Endothelial cell of umbilical vein (primary cell): ENCODE measurements at regions of chr16 and their contacts with region 1.

Region 1: DNA sequence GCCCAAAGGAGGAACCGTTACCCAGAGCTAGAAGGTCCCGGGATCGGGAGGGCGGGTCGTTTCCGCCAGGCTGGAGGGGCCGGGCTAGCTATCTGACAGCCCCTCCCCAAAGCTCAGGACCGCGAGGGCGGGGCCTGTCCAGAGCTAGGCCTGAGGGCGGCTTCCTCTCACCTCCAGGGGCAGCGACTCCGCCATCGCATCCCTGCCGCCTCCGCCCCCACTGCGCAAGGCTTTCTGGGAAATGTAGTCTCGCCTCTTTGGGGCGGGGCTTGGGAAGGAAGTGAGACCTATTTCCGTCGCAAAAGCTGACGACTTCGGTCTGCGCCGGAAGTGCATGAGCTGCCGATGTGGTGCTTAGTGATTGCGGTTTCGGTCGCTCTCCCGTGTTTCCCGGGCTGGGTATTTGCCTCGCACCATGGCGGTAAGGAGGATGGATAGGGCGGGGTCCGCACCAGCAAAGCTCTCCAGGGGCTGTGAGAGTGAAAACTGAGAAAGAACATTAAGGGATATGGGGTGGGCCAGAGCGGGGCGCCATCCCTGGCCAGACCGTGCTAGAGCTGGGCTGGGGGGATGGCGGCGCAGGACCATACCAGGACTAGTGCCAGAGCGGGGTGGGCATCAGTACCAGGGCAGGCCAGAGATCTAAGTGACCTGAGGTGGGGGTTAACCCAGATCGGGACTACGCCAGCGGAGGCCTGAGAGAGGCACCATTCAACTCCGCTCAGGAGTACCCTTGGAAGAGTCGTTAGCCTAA is at the start of gene TMEM208:
- DNase-seq: peak; percentile 98
- H3K4me3 ChIP-seq: peak within 1 kb of the TSS; percentile 66 to 86 (median 78)
- H3K27ac ChIP-seq: peak within 1 kb of the TSS; percentile 44
- H3K4me1 ChIP-seq: peaks cover 18% of the 10 kb centered on the region
- H3K27me3 ChIP-seq: no peaks in the 10 kb centered on the region
- CTCF ChIP-seq: peak in 1 of 2 donors; percentile 21
- POLR2A ChIP-seq: peak; percentile 81
- total RNA-seq, gene TMEM208: 35.3 and 36.3 TPM in 2 replicates

Region 2: DNA sequence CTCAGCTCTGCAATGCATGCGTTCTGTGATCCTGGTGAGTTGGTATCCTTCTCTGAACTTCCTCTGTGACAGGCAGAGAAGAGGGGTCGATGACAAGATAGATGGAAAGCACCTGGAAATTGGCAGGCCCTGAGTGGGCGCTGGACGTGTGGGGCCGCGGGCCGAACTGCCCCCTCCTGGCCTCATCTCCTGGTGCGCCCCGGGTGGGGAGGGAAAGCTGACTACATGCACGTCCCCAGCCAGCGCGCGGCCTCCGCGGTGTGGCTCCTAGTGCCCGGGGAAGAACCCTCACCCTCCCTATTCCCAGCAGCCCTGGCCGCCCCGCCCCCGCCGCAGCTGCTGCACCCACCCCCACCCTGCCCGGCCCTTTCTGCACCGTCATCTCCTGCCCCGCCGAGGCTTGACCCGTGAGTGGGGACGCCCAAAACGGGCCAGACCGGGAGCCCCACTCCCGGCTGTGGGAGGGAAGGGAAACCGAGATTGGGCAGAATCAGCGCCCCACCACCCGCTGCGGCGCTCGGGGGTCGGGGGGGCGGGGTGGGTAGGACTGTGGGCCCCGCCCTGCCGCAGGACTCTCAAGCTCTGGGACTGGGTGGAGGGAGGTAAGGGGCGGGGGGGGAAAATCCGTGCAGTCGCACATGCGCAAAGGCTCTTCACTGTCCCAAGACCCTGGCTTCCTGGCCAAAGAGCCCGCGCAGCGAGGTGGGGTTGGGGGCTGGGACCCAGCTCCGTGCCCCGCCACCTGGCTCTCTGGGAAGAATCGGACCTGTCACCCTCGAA is 56.6 kb before region 1 on chr16 and contains the start of gene NOL3:
- CTCF ChIA-PET with region 1: no interaction called
- POLR2A ChIA-PET with region 1: no interaction called
- dilution Hi-C with region 1: no loop called
- intact Hi-C with region 1: no loop called
- DNase-seq: peak; percentile 88
- H3K4me3 ChIP-seq: peak within 1 kb of the TSS; percentile 29 to 50 (median 34)
- H3K27ac ChIP-seq: peak within 1 kb of the TSS; percentile 74
- H3K4me1 ChIP-seq: peaks cover 27% of the 10 kb centered on the region
- H3K27me3 ChIP-seq: peaks cover 13 to 19% of the 10 kb centered on the region in 2 experiments
- CTCF ChIP-seq: peak in 1 of 2 donors; percentile 6
- POLR2A ChIP-seq: peak; percentile 63
- total RNA-seq, gene NOL3: 14.4 and 19.4 TPM in 2 replicates

Region 3: GRCh38 chr16:67191995-67192681 is 34.8 kb before region 1 on chr16 and contains the start of gene E2F4:
- CTCF ChIA-PET with region 1: no interaction called
- POLR2A ChIA-PET with region 1: no interaction called
- dilution Hi-C with region 1: no loop called
- intact Hi-C with region 1: loop called (anchors 5 kb)
- DNase-seq: peak; percentile 88
- H3K4me3 ChIP-seq: peak within 1 kb of the TSS; percentile 54 to 83 (median 57)
- H3K27ac ChIP-seq: peak within 1 kb of the TSS; percentile 88
- H3K4me1 ChIP-seq: peaks cover 36% of the 10 kb centered on the region
- H3K27me3 ChIP-seq: no peaks in the 10 kb centered on the region
- CTCF ChIP-seq: no peak
- POLR2A ChIP-seq: peak; percentile 93
- total RNA-seq, gene E2F4: 110 and 112 TPM in 2 replicates

Region 4: DNA sequence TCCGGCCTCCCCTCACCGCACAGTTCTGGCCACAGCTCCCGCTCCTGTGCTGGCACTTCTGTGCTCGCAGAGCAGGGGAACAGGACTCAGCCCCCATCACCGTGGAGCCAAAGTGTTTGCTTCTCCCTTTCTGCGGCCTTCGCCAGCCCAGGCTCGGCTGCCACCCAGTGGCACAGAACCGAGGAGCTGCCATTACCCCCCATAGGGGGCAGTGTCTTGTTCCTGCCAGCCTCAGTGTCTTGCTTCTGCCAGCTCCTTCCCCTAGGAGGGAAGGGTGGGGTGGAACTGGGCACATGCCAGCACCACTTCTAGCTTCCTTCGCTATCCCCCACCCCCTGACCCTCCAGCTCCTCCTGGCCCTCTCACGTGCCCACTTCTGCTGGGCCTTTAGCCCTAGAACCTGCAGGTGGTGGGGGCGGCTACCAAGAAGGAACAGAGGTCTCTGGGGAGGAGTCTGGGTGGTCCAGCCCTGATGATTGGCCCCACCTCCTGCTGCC is 28.7 kb before region 1 on chr16:
- CTCF ChIA-PET with region 1: interaction called, 15 read pairs
- POLR2A ChIA-PET with region 1: no interaction called
- dilution Hi-C with region 1: no loop called
- intact Hi-C with region 1: loop called (anchors 5 kb)
- DNase-seq: peak; percentile 63
- H3K4me3 ChIP-seq: no peak overlapping the region
- H3K27ac ChIP-seq: no peak overlapping the region
- H3K4me1 ChIP-seq: peaks cover 12% of the 10 kb centered on the region
- H3K27me3 ChIP-seq: no peaks in the 10 kb centered on the region
- CTCF ChIP-seq: peak; percentile 92 to 96
- POLR2A ChIP-seq: no peak

Region 5: GRCh38 chr16:67216612-67217490 is 10.1 kb before region 1 on chr16:
- CTCF ChIA-PET with region 1: interaction called, 5 read pairs
- POLR2A ChIA-PET with region 1: interaction called, 8 read pairs
- dilution Hi-C with region 1: no loop called
- intact Hi-C with region 1: loop called (anchors 1 kb)
- DNase-seq: peak; percentile 66
- H3K4me3 ChIP-seq: no peak overlapping the region
- H3K27ac ChIP-seq: peak overlapping the region; percentile 30
- H3K4me1 ChIP-seq: peaks cover 22% of the 10 kb centered on the region
- H3K27me3 ChIP-seq: no peaks in the 10 kb centered on the region
- CTCF ChIP-seq: no peak
- POLR2A ChIP-seq: peak; percentile 26